Lower leg skin (tissue), 4 donors: ENCODE measurements at regions of chr3 and their contacts with region 1.

Region 1: GRCh38 chr3:41881233-41881821 is 80.6 kb downstream of the ULK4 start:
- DNase-seq: peak in 1 of 2 donors; percentile 18
- H3K4me3 ChIP-seq: no peak overlapping the region
- CTCF ChIP-seq: peak in 1 of 3 donors; percentile 37
- POLR2A ChIP-seq: no peak

Region 2: GRCh38 chr3:40329071-40329470 is 1552.3 kb before region 1 on chr3:
- intact Hi-C with region 1: loop called (anchors 5 kb)
- DNase-seq: no peak
- H3K4me3 ChIP-seq: no peak overlapping the region
- CTCF ChIP-seq: no peak
- POLR2A ChIP-seq: no peak